Heart right ventricle (tissue), 16 donors: ENCODE measurements at regions of chr3 and their contacts with region 1.

Region 1: GRCh38 chr3:14796403-14797077 is 22.2 kb upstream of the FGD5 start:
- DNase-seq: no peak
- ATAC-seq: no peak
- H3K4me3 ChIP-seq: no peak overlapping the region
- H3K27ac ChIP-seq: peak overlapping the region in 1 of 10 donors; percentile 25
- H3K4me1 ChIP-seq: peaks cover 11 to 51% (median 33%) of the 10 kb centered on the region in 9 donors
- H3K27me3 ChIP-seq: peaks cover 0 to 6% (median 0%) of the 10 kb centered on the region in 7 donors
- CTCF ChIP-seq: no peak

Region 2: GRCh38 chr3:14143271-14144225 is 653.0 kb before region 1 on chr3:
- intact Hi-C with region 1: no loop called
- DNase-seq: peak in 1 of 2 donors; percentile 41
- ATAC-seq: peak in 6 of 8 donors; percentile 25 to 47 (median 40)
- H3K4me3 ChIP-seq: peak overlapping the region in 1 of 10 donors; percentile 34
- H3K27ac ChIP-seq: peak overlapping the region; percentile 33 to 93 (median 84)
- H3K4me1 ChIP-seq: peaks cover 14 to 71% (median 37%) of the 10 kb centered on the region in 9 donors
- H3K27me3 ChIP-seq: no peaks in the 10 kb centered on the region
- CTCF ChIP-seq: no peak

Region 3: DNA sequence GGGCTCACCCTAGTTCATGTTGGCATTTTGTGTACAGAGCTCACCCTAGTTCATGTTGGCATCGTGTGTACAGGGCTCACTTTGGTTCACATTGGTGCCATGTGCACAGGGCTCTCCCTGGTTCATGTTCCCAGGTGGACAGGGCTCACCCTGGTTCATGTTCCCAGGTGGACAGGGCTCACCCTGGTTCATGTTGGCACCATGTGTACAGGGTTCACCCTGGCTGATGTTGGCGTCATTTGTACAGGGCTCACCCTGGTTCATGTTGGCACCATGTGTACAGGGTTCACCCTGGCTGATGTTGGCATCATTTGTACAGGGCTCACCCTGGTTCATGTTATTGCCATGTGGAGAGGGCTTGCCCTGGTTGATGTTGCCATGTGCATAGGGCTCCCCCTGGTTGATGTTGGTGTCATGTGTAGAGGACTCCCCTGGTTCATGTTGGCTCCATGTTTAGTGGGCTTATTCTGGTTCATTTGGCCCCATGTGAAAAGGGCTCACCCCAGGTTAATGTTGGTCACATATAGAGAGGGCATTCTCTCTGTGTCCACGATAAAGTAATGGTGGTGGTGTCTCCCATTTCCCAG is 119.2 kb after region 1 on chr3:
- intact Hi-C with region 1: loop called in 7 of 10 experiments (anchors 2 to 5 kb)
- DNase-seq: no peak
- ATAC-seq: peak in 3 of 8 donors; percentile 10 to 34 (median 17)
- H3K4me3 ChIP-seq: no peak overlapping the region
- H3K27ac ChIP-seq: no peak overlapping the region
- H3K4me1 ChIP-seq: peaks cover 0 to 10% (median 2%) of the 10 kb centered on the region in 9 donors
- H3K27me3 ChIP-seq: peaks cover 0 to 4% (median 0%) of the 10 kb centered on the region in 7 donors
- CTCF ChIP-seq: peak in 5 of 9 donors; percentile 20 to 34 (median 25)

Region 4: DNA sequence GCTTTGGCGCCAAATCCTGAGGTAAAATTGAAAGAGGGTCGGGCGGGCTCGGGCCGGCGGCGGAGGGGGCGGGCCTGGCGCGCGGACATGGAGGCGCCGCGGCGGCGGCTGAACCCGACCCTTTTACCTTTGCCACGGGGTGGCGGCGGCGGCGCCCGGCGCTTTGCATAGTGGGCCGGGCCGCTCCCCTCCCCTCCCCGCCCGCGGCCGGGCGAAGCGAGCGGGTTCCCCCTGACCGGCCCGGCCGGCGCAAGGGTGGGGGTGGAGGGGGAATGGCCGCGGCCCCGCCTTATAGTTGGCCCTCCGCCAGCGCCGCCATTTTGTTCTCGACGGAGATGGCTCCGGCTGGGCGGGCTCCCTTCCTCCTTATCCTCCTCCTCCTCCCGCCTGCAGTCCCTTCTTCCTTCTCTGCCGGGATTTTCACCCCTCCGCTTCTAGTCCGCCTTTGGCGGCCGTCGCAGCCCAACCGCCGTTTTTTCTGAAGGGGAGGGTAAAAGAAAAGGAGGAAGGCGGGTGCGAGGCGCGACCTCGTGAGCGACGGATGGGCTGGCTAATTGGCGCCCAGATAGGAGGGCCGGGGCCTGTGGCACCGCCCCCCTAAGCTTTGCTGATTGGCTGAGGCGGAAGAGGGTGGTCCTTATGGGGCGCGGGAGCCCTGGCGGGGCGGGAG is 151.5 kb after region 1 on chr3:
- intact Hi-C with region 1: no loop called
- DNase-seq: peak; percentile 97
- ATAC-seq: peak; percentile 96 to 99 (median 98)
- H3K4me3 ChIP-seq: peak overlapping the region; percentile 74 to 96 (median 86)
- H3K27ac ChIP-seq: peak overlapping the region; percentile 96 to 100 (median 99)
- H3K4me1 ChIP-seq: peaks cover 11 to 55% (median 35%) of the 10 kb centered on the region in 9 donors
- H3K27me3 ChIP-seq: no peaks in the 10 kb centered on the region
- CTCF ChIP-seq: peak in 2 of 9 donors; percentile 6 to 13